Gastrocnemius medialis (tissue), 4 donors: ENCODE measurements at regions of chr20 and their contacts with region 1.

Region 1: DNA sequence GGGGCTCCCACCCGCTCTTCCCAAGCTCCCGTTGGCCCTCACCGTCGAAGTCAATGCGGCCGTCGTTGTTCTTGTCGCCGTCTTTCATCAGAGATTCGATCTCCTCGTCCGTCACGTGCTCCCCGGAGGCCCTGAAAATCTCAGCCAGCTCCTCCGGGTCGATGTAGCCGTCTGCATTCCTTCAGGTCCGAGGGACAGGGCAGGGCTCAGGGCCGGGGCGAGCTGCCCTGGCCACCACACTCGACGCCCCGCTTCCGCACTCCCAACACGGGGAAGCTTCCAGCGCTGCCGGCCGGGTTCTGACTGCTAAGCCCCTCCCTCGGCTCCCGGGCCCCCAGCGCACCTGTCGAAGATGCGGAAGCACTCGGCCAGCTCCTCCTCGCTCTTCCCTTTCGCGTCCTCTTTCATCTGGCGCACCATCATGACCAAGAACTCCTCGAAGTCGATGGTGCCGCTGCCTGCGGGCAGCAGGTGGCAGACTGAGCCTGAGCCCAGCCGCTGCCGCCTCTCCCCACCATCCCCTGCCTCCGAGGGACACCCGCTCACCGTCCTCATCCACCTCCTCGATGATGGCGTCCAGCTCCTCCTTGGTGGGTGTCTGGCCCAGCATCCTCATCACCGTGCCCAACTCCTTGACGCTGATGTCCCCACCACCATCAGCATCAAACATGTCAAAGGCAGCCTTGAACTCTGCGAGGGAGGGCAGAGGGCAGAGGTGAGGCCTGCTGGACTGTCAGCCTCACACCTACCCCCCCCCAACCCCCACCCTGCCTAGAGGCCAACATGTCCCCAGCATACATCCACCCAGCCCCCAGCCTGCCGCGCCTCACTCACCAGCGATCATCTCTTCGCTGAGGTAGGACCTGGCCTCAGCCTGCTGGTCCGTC is 2.9 kb downstream of the TNNC2 start:
- DNase-seq: peak; percentile 50 to 74
- ATAC-seq: peak in 1 of 2 donors; percentile 9
- H3K4me3 ChIP-seq: peak overlapping the region; percentile 27 to 63 (median 46)
- H3K27ac ChIP-seq: peak overlapping the region; percentile 95 to 97 (median 96)
- H3K4me1 ChIP-seq: peaks cover 55 to 60% of the 10 kb centered on the region in 2 donors
- H3K27me3 ChIP-seq: no peaks in the 10 kb centered on the region
- CTCF ChIP-seq: peak; percentile 23 to 68 (median 59)
- POLR2A ChIP-seq: no peak

Region 2: GRCh38 chr20:45735552-45735951 is 88.6 kb before region 1 on chr20:
- in situ Hi-C with region 1: no loop called
- intact Hi-C with region 1: no loop called
- DNase-seq: no peak
- ATAC-seq: no peak
- H3K4me3 ChIP-seq: no peak overlapping the region
- H3K27ac ChIP-seq: no peak overlapping the region
- H3K4me1 ChIP-seq: no peaks in the 10 kb centered on the region
- H3K27me3 ChIP-seq: no peaks in the 10 kb centered on the region
- CTCF ChIP-seq: no peak
- POLR2A ChIP-seq: no peak

Region 3: GRCh38 chr20:45788351-45788750 is 35.8 kb before region 1 on chr20:
- in situ Hi-C with region 1: no loop called
- intact Hi-C with region 1: no loop called
- DNase-seq: no peak
- ATAC-seq: no peak
- H3K4me3 ChIP-seq: no peak overlapping the region
- H3K27ac ChIP-seq: no peak overlapping the region
- H3K4me1 ChIP-seq: peaks cover 7 to 10% of the 10 kb centered on the region in 2 donors
- H3K27me3 ChIP-seq: no peaks in the 10 kb centered on the region
- CTCF ChIP-seq: no peak
- POLR2A ChIP-seq: no peak

Region 4: DNA sequence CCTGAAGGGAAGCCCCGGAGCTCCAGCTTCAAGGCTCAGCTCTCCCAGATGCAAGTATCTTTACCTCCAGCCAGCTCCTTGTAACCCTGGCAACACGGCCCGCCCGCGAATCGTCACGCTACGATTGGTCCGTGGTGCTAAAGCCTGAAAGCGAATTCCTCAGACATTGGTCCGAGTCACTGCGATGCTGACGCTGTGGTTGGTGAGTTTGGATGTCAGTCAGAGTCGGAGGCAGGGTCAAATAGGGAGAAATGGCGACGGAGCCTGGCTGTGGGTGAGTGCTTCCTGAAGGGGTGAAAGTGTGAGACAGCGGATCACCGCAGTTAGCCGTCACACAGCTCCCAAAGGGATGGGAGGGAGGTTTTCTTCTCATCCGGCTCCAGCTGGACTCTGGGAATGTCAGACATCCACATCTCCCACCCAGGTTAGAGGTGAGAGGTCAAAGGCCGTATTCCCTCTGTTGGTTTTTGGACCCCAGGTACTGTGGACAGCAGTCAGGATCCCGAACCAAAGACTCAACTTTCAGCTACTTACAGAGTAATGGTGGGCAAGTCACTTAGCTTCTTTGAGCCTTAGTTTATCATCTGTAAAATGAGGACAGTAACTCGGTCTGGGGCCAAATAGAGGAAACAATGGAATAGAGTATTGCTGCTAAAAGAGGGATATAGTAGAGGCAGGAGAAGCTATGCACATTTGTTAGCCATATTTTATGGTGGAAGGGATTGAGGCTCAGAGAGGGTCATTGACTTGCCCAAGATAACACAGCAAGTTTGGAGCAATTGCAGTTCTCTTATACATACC is 57.0 kb after region 1 on chr20 and contains the start of gene ZSWIM1:
- in situ Hi-C with region 1: no loop called
- intact Hi-C with region 1: loop called (anchors 1 kb)
- DNase-seq: peak; percentile 98 to 99
- ATAC-seq: peak; percentile 100
- H3K4me3 ChIP-seq: peak within 1 kb of the TSS; percentile 67 to 70 (median 68)
- H3K27ac ChIP-seq: peak within 1 kb of the TSS; percentile 87 to 95 (median 92)
- H3K4me1 ChIP-seq: peaks cover 9 to 13% of the 10 kb centered on the region in 2 donors
- H3K27me3 ChIP-seq: no peaks in the 10 kb centered on the region
- CTCF ChIP-seq: no peak
- POLR2A ChIP-seq: peak in 1 of 2 donors; percentile 45
- total RNA-seq, gene ZSWIM1: 5.7 to 8.5 (median 6.9) TPM

Region 5: GRCh38 chr20:45890985-45891983 is 67.1 kb after region 1 on chr20 and contains the starts of genes CTSA and NEURL2:
- in situ Hi-C with region 1: no loop called
- intact Hi-C with region 1: loop called (anchors 1 kb)
- DNase-seq: peak; percentile 90 to 93
- ATAC-seq: peak; percentile 89 to 91
- H3K4me3 ChIP-seq: peak within 1 kb of the TSS; percentile 76 to 96 (median 88)
- H3K27ac ChIP-seq: peak within 1 kb of the TSS; percentile 87 to 98 (median 96)
- H3K4me1 ChIP-seq: peaks cover 22 to 26% of the 10 kb centered on the region in 2 donors
- H3K27me3 ChIP-seq: no peaks in the 10 kb centered on the region
- CTCF ChIP-seq: peak in 3 of 5 experiments; percentile 16 to 27 (median 17)
- POLR2A ChIP-seq: peak; percentile 48 to 59
- total RNA-seq, gene CTSA: 21.9 to 59.2 (median 46.2) TPM
- total RNA-seq, gene NEURL2: 4.9 to 24.1 (median 10.2) TPM

Region 6: GRCh38 chr20:45946149-45946970 is 122.2 kb after region 1 on chr20:
- in situ Hi-C with region 1: loop called in 2 of 4 experiments (anchors 10 to 25 kb)
- intact Hi-C with region 1: no loop called
- DNase-seq: peak; percentile 81 to 91
- ATAC-seq: peak; percentile 65 to 89
- H3K4me3 ChIP-seq: no peak overlapping the region
- H3K27ac ChIP-seq: peak overlapping the region; percentile 86 to 96 (median 92)
- H3K4me1 ChIP-seq: peaks cover 15 to 35% of the 10 kb centered on the region in 2 donors
- H3K27me3 ChIP-seq: no peaks in the 10 kb centered on the region
- CTCF ChIP-seq: no peak
- POLR2A ChIP-seq: peak in 1 of 2 donors; percentile 57